ENCODE measurements at regions of chr12 and their contacts with region 1.

Region 1: DNA sequence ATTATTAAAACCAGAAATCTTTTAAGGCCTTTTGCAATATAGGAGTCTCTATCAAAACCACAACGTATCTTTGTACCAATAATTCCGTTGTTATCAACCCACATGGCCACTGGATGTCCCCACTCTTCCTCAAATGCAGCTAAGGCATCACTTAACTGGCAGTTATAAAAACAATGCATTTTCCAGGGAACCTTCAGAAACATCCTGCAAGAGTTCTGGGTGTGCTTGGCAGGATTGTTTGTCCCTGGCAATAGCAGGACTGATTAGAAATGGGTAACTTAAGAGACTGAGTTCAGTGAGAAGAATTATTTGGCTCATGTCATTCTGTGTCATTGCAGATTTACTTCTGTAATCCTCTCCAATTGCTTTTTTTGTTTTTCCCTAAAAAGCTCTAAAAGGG is 112.0 kb downstream of the SLC15A5 start:
- DNase-seq: peak; percentile 27
- H3K4me3 ChIP-seq: no peak overlapping the region
- H3K27ac ChIP-seq: no peak overlapping the region
- H3K4me1 ChIP-seq: peaks cover 8% of the 10 kb centered on the region
- H3K27me3 ChIP-seq: no peaks in the 10 kb centered on the region
- CTCF ChIP-seq: peak; percentile 53 to 71

Region 2: DNA sequence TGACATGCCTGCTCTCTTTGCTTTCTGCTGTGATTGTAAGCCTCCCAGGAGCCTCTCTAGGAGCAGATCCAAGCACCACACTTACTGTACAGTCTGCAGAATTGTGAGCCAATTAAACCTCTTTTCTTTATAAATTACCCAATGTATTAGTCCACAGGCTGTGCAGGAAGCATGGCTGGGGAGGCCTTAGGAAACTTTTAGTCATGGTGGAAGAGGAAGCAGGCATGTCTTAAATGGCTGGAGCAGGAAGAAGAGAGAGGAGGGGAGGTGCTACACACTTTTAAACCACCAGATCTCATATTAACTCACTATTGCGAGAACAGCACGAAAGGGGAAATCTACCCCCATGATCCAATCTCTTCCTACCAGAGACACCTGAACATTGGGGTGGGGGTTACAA is 145.5 kb before region 1 on chr12:
- CTCF ChIA-PET with region 1: no interaction called
- dilution Hi-C with region 1: no loop called
- in situ Hi-C with region 1: no loop called
- intact Hi-C with region 1: no loop called
- DNase-seq: no peak
- H3K4me3 ChIP-seq: no peak overlapping the region
- H3K27ac ChIP-seq: no peak overlapping the region
- H3K4me1 ChIP-seq: no peaks in the 10 kb centered on the region
- H3K27me3 ChIP-seq: no peaks in the 10 kb centered on the region
- CTCF ChIP-seq: no peak

Region 3: DNA sequence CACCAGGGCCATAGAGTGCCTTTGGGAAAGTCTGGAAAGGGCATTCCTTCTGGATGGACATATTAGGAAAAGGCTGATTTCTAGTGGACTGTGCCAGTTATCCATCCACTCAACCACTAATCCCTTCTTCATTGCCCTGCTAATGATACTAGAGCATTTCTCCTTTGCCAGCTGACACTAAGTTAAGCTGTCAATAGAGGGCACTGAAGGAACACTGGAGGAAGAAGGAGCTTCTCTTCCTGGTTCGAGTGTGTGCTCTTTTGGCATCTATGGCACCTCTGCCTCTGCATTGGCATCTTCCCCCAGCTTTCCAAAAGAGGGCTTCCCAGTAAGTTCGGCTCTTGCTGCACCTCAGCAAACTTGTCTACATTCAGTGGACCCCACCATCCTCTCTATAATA is 89.0 kb before region 1 on chr12:
- CTCF ChIA-PET with region 1: no interaction called
- dilution Hi-C with region 1: no loop called
- in situ Hi-C with region 1: no loop called
- intact Hi-C with region 1: loop called (anchors 5 kb)
- DNase-seq: peak; percentile 38
- H3K4me3 ChIP-seq: no peak overlapping the region
- H3K27ac ChIP-seq: no peak overlapping the region
- H3K4me1 ChIP-seq: no peaks in the 10 kb centered on the region
- H3K27me3 ChIP-seq: no peaks in the 10 kb centered on the region
- CTCF ChIP-seq: peak; percentile 47 to 82

Region 4: DNA sequence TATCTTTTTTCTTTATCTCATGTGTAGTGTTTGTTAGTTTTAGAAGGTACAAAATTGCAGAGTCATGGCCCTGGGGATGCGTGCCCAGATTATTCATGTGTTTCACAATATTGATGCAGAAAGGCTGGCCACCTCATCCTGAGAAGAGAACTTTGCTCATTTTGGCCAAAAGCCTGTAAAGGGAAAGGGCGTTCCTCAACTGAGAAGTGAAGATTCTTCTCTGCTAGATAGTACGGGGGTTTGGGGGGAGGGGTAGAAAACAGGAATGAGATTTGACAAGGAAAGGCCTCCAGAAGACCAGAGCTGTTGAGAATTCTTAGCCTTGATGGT is 183.6 kb after region 1 on chr12:
- CTCF ChIA-PET with region 1: no interaction called
- dilution Hi-C with region 1: no loop called
- in situ Hi-C with region 1: loop called (anchors 10 kb)
- intact Hi-C with region 1: loop called (anchors 2 kb)
- DNase-seq: peak; percentile 85
- H3K4me3 ChIP-seq: peak overlapping the region; percentile 72 to 96 (median 93)
- H3K27ac ChIP-seq: peak overlapping the region; percentile 91
- H3K4me1 ChIP-seq: peaks cover 29% of the 10 kb centered on the region
- H3K27me3 ChIP-seq: no peaks in the 10 kb centered on the region
- CTCF ChIP-seq: no peak

Region 5: GRCh38 chr12:16359512-16360491 is 194.3 kb after region 1 on chr12:
- CTCF ChIA-PET with region 1: no interaction called
- dilution Hi-C with region 1: no loop called
- in situ Hi-C with region 1: loop called (anchors 10 kb)
- intact Hi-C with region 1: loop called (anchors 1 kb)
- DNase-seq: peak; percentile 25
- H3K4me3 ChIP-seq: no peak overlapping the region
- H3K27ac ChIP-seq: no peak overlapping the region
- H3K4me1 ChIP-seq: no peaks in the 10 kb centered on the region
- H3K27me3 ChIP-seq: no peaks in the 10 kb centered on the region
- CTCF ChIP-seq: peak; percentile 83 to 87

Region 6: GRCh38 chr12:16385782-16386646 is 220.5 kb after region 1 on chr12:
- CTCF ChIA-PET with region 1: no interaction called
- dilution Hi-C with region 1: no loop called
- in situ Hi-C with region 1: no loop called
- intact Hi-C with region 1: loop called (anchors 1 kb)
- DNase-seq: peak; percentile 44
- H3K4me3 ChIP-seq: no peak overlapping the region
- H3K27ac ChIP-seq: no peak overlapping the region
- H3K4me1 ChIP-seq: peaks cover 9% of the 10 kb centered on the region
- H3K27me3 ChIP-seq: no peaks in the 10 kb centered on the region
- CTCF ChIP-seq: peak; percentile 26 to 64

Region 7: GRCh38 chr12:16685107-16685506 is 519.6 kb after region 1 on chr12:
- CTCF ChIA-PET with region 1: interaction called, 6 read pairs
- dilution Hi-C with region 1: no loop called
- in situ Hi-C with region 1: loop called in 1 of 2 experiments (anchors 25 kb)
- intact Hi-C with region 1: loop called (anchors 1 kb)
- DNase-seq: peak; percentile 2
- H3K4me3 ChIP-seq: no peak overlapping the region
- H3K27ac ChIP-seq: no peak overlapping the region
- H3K4me1 ChIP-seq: no peaks in the 10 kb centered on the region
- H3K27me3 ChIP-seq: no peaks in the 10 kb centered on the region
- CTCF ChIP-seq: peak; percentile 29 to 62

Measured in mammary epithelial cell (primary cell).